OCI-LY7 (cell line): ENCODE measurements at regions of chr3 and their contacts with region 1.

Region 1: GRCh38 chr3:74129056-74129455 is 485.4 kb downstream of the CNTN3 start:
- DNase-seq: no peak
- H3K4me3 ChIP-seq: no peak overlapping the region
- H3K27ac ChIP-seq: no peak overlapping the region
- H3K4me1 ChIP-seq: no peaks in the 10 kb centered on the region
- CTCF ChIP-seq: no peak

Region 2: DNA sequence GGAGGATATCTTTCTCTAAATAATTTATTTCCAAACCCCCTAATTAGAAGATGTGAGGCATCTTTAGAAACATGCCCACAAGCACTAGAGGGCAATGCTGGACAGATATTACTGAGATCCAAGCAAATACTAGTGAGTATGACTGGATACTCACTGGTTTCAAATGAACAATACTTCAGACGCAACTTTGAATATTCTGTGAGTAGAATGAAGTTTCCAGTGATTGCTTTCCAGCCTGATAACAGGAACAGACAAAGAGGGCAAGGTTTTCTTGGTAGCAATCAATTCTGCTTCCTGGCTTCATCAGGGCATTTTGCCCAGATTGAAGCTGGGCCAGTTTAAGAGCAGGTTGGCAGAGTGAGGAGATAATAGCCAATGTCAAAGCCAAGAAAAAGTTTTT is 61.8 kb before region 1 on chr3:
- CTCF ChIA-PET with region 1: no interaction called
- POLR2A ChIA-PET with region 1: no interaction called
- intact Hi-C with region 1: no loop called
- DNase-seq: no peak
- H3K4me3 ChIP-seq: no peak overlapping the region
- H3K27ac ChIP-seq: no peak overlapping the region
- H3K4me1 ChIP-seq: no peaks in the 10 kb centered on the region
- CTCF ChIP-seq: 0 out of 2 replicates have a peak, but pooled peaks have one; percentile 13

Region 3: GRCh38 chr3:74089814-74090213 is 39.2 kb before region 1 on chr3:
- CTCF ChIA-PET with region 1: no interaction called
- POLR2A ChIA-PET with region 1: interaction called, 12 read pairs
- intact Hi-C with region 1: no loop called
- DNase-seq: no peak
- H3K4me3 ChIP-seq: no peak overlapping the region
- H3K27ac ChIP-seq: no peak overlapping the region
- H3K4me1 ChIP-seq: no peaks in the 10 kb centered on the region
- CTCF ChIP-seq: no peak

Region 4: GRCh38 chr3:74231751-74232150 is 102.7 kb after region 1 on chr3:
- CTCF ChIA-PET with region 1: no interaction called
- POLR2A ChIA-PET with region 1: no interaction called
- intact Hi-C with region 1: no loop called
- DNase-seq: no peak
- H3K4me3 ChIP-seq: no peak overlapping the region
- H3K27ac ChIP-seq: no peak overlapping the region
- H3K4me1 ChIP-seq: no peaks in the 10 kb centered on the region
- CTCF ChIP-seq: no peak